Heart right ventricle (tissue), 16 donors: ENCODE measurements at regions of chr6 and their contacts with region 1.

Region 1: DNA sequence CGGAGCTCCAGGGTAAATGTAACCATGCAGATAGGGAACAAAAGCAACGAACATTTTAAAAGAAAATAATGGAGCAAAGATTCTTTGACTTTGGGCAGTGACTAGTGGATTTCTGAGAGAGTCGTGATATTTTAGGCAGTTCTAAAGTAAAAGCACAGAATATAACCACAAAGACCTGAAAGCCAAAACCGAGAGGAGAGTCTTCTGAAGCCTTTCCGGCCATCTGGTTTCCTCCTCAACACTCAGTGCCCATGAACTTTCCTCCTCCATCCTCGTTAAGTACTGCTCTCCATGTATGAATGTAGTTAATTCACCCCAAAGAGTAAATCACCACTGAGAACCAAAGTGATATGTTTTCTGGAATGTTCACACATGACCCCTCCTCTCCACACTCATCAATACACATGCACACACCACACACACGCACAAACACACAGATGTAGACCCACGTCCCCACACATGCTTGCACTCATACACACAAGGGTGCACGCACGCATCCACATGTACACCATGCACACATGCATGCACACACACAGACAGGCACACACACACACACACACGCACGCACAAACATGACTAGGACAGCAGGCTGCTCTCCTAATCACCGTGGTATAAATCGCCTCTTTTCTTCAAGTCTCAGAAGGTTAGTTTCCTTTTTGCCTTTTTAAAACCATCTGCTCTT is 109.5 kb downstream of the MYLK4 start:
- DNase-seq: no peak
- ATAC-seq: no peak
- H3K4me3 ChIP-seq: no peak overlapping the region
- H3K27ac ChIP-seq: no peak overlapping the region
- H3K4me1 ChIP-seq: no peaks in the 10 kb centered on the region
- H3K27me3 ChIP-seq: peaks cover 0 to 21% (median 3%) of the 10 kb centered on the region in 7 donors
- CTCF ChIP-seq: no peak

Region 2: GRCh38 chr6:2363211-2363610 is 278.0 kb before region 1 on chr6:
- intact Hi-C with region 1: loop called in 4 of 10 experiments (anchors 10 kb)
- DNase-seq: no peak
- ATAC-seq: no peak
- H3K4me3 ChIP-seq: no peak overlapping the region
- H3K27ac ChIP-seq: no peak overlapping the region
- H3K4me1 ChIP-seq: no peaks in the 10 kb centered on the region
- H3K27me3 ChIP-seq: no peaks in the 10 kb centered on the region
- CTCF ChIP-seq: no peak